ENCODE measurements at regions of chr3 and their contacts with region 1.

Region 1: DNA sequence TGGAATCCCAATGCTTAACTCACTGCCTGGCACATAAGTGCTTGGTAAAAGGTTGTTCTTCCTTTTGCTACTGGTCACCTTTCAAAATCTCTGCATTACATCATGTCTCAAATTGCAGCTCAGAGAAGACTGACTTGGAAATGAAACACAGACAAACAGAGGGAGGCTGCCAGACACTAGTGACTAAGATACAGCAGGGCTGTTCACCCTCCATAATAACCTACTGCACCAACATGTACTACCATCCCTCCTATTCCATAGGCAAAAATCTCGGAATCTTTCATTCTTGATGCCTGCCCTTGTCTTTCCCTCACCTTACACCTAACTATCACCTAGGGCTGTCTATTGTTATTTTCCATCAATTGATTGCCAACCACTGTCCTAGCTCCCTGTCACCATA is 502.3 kb upstream of the ADAMTS9 start:
- DNase-seq: no peak
- H3K4me3 ChIP-seq: no peak overlapping the region
- H3K27ac ChIP-seq: no peak overlapping the region
- H3K4me1 ChIP-seq: peaks cover 0 to 2% (median 0%) of the 10 kb centered on the region in 4 experiments; a peak in 2 of 7 replicates
- H3K27me3 ChIP-seq: no peaks in the 10 kb centered on the region
- CTCF ChIP-seq: no peak
- EP300 ChIP-seq: no peak
- POLR2A ChIP-seq: no peak
- RAD21 ChIP-seq: no peak

Region 2: GRCh38 chr3:65170390-65171042 is 19.6 kb before region 1 on chr3:
- CTCF ChIA-PET with region 1: interaction called, 37 read pairs
- POLR2A ChIA-PET with region 1: no interaction called
- DNase-seq: no peak
- H3K4me3 ChIP-seq: no peak overlapping the region
- H3K27ac ChIP-seq: no peak overlapping the region
- H3K4me1 ChIP-seq: no peaks in the 10 kb centered on the region
- H3K27me3 ChIP-seq: no peaks in the 10 kb centered on the region
- CTCF ChIP-seq: peak in 2 of 3 experiments; percentile 32 to 56; a peak in 2 of 4 replicates
- EP300 ChIP-seq: no peak
- POLR2A ChIP-seq: no peak
- RAD21 ChIP-seq: peak; percentile 66 to 75